ENCODE measurements at regions of chr1 and their contacts with region 1.

Region 1: GRCh38 chr1:206583707-206584648 is 28.3 kb downstream of the EIF2D start:
- DNase-seq: peak; percentile 90
- H3K4me3 Mint-ChIP-seq: no peak overlapping the region
- H3K27ac Mint-ChIP-seq: no peak overlapping the region
- H3K4me1 Mint-ChIP-seq: peaks cover 20% of the 10 kb centered on the region
- H3K27me3 Mint-ChIP-seq: no peaks in the 10 kb centered on the region
- CTCF ChIP-seq: peak; percentile 99

Region 2: DNA sequence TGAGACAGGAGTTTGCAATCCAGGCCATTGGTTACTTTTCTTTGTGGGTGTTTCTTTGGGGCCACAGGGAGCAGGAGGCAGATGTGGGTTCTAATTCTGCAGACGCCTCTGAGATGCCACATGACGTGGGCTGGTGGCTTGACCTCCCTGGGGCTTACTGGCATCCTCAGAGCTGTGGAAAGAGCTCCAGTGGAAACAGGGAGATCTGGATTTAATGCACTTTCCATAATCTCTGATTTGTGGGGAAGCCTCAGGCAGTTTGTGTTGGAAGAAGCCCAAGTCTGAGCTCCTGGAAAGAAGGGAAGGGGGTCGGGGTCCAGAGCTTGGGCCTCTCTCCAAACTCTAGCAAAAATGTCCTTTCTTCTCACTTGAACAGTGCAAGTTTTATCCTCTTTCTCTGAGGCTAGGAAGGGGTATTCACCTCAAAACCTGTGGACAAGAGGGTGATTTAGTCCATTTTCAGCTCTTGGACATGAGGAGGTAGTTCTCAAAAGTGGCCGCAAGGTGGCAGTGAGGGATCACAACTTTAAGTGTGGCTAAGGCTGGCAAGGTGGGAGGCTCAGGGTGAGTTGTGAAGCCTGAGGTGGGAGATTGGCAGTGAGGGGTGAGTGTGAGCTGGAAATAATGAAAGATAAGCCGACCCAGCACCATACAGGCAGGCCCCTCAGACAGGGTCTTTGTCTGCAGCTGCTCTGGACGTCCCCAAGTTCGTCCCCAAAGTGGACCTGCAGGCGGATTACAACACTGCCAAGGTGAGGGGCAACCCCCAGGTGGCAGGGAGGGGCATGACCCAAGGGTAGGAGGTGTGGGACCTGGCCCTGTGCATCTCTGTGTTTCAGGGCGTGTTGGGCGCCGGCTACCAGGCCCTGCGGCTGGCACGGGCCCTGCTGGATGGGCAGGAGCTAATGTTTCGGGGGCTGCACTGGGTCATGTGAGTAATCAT is 104.5 kb before region 1 on chr1:
- CTCF ChIA-PET with region 1: interaction called, 268 read pairs
- POLR2A ChIA-PET with region 1: interaction called, 5 read pairs
- intact Hi-C with region 1: no loop called
- DNase-seq: peak; percentile 93
- H3K4me3 Mint-ChIP-seq: no peak overlapping the region
- H3K27ac Mint-ChIP-seq: no peak overlapping the region
- H3K4me1 Mint-ChIP-seq: peaks cover 29% of the 10 kb centered on the region
- H3K27me3 Mint-ChIP-seq: no peaks in the 10 kb centered on the region
- CTCF ChIP-seq: peak; percentile 97

Region 3: GRCh38 chr1:206507284-206508129 is 76.5 kb before region 1 on chr1 and contains the start of gene RASSF5:
- CTCF ChIA-PET with region 1: interaction called, 851 read pairs
- POLR2A ChIA-PET with region 1: interaction called, 5 read pairs
- intact Hi-C with region 1: loop called (anchors 1 kb)
- DNase-seq: peak; percentile 87
- H3K4me3 Mint-ChIP-seq: peak within 1 kb of the TSS; percentile 72
- H3K27ac Mint-ChIP-seq: peak within 1 kb of the TSS; percentile 72
- H3K4me1 Mint-ChIP-seq: peaks cover 74% of the 10 kb centered on the region
- H3K27me3 Mint-ChIP-seq: no peaks in the 10 kb centered on the region
- CTCF ChIP-seq: no peak
- total RNA-seq, gene RASSF5: 8.3 and 9.6 TPM in 2 replicates

Region 4: DNA sequence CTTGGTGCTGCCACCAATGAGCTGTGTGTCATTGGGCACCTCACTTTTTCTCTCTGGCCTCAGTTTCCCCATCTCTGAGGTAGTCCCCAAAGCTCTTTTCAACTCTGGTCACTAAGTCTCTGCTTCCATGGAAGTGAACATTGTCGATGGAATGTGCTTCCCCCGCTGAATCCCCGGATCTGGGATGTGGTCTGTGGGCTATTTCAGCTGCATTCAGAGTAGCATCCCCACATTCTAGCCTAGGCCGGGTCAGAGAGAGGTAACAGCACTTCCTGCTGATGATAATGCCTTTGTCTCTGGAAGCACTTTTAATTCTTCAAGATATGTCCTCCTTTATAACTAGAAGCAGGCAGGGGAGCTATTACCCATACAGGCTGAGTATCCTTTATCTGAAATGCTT is 46.8 kb before region 1 on chr1:
- CTCF ChIA-PET with region 1: interaction called, 277 read pairs
- POLR2A ChIA-PET with region 1: interaction called, 3 read pairs
- intact Hi-C with region 1: no loop called
- DNase-seq: no peak
- H3K4me3 Mint-ChIP-seq: no peak overlapping the region
- H3K27ac Mint-ChIP-seq: no peak overlapping the region
- H3K4me1 Mint-ChIP-seq: no peaks in the 10 kb centered on the region
- H3K27me3 Mint-ChIP-seq: no peaks in the 10 kb centered on the region
- CTCF ChIP-seq: no peak

Region 5: GRCh38 chr1:206556750-206557635 is 27.0 kb before region 1 on chr1:
- CTCF ChIA-PET with region 1: interaction called, 77 read pairs
- POLR2A ChIA-PET with region 1: interaction called, 3 read pairs
- intact Hi-C with region 1: no loop called
- DNase-seq: peak; percentile 66
- H3K4me3 Mint-ChIP-seq: peak overlapping the region; percentile 68
- H3K27ac Mint-ChIP-seq: no peak overlapping the region
- H3K4me1 Mint-ChIP-seq: no peaks in the 10 kb centered on the region
- H3K27me3 Mint-ChIP-seq: no peaks in the 10 kb centered on the region
- CTCF ChIP-seq: no peak

Region 6: GRCh38 chr1:206612129-206612876 is 28.3 kb after region 1 on chr1 and contains the start of gene EIF2D:
- CTCF ChIA-PET with region 1: interaction called, 21 read pairs
- POLR2A ChIA-PET with region 1: no interaction called
- intact Hi-C with region 1: no loop called
- DNase-seq: peak; percentile 99
- H3K4me3 Mint-ChIP-seq: peak within 1 kb of the TSS; percentile 88
- H3K27ac Mint-ChIP-seq: peak within 1 kb of the TSS; percentile 97
- H3K4me1 Mint-ChIP-seq: peaks cover 21% of the 10 kb centered on the region
- H3K27me3 Mint-ChIP-seq: no peaks in the 10 kb centered on the region
- CTCF ChIP-seq: peak; percentile 100
- total RNA-seq, gene EIF2D: 110 and 116 TPM in 2 replicates